ENCODE measurements at regions of chr1 and their contacts with region 1.

Region 1: GRCh38 chr1:3827813-3828307 is 29.2 kb downstream of the CEP104 start:
- DNase-seq: peak in 1 of 2 experiments; percentile 51
- H3K4me3 ChIP-seq: no peak overlapping the region
- H3K27ac ChIP-seq: no peak overlapping the region
- H3K4me1 ChIP-seq: no peaks in the 10 kb centered on the region
- H3K27me3 ChIP-seq: no peaks in the 10 kb centered on the region
- CTCF ChIP-seq: peak; percentile 41 to 67 (median 54)
- EP300 ChIP-seq: no peak
- POLR2A ChIP-seq: no peak
- RAD21 ChIP-seq: peak; percentile 21 to 51; a peak in 3 of 4 replicates

Region 2: GRCh38 chr1:3838788-3839187 is 10.9 kb after region 1 on chr1:
- CTCF ChIA-PET with region 1: interaction called, 23 read pairs
- POLR2A ChIA-PET with region 1: interaction called, 3 read pairs
- DNase-seq: no peak
- H3K4me3 ChIP-seq: no peak overlapping the region
- H3K27ac ChIP-seq: no peak overlapping the region
- H3K4me1 ChIP-seq: no peaks in the 10 kb centered on the region
- H3K27me3 ChIP-seq: no peaks in the 10 kb centered on the region
- CTCF ChIP-seq: no peak
- EP300 ChIP-seq: no peak
- POLR2A ChIP-seq: no peak
- RAD21 ChIP-seq: no peak

Measured in H1 (cell line).